ENCODE measurements at regions of chr2 and their contacts with region 1.

Region 1: GRCh38 chr2:27016801-27017325 is 15.9 kb upstream of the TMEM214 start:
- DNase-seq: peak in 6 of 7 donors; percentile 43 to 78 (median 70)
- H3K4me3 ChIP-seq: no peak overlapping the region
- H3K27ac ChIP-seq: peak overlapping the region in 2 of 5 donors; percentile 28 to 69
- H3K4me1 ChIP-seq: peaks cover 0 to 23% of the 10 kb centered on the region in 2 donors
- H3K27me3 ChIP-seq: no peaks in the 10 kb centered on the region
- CTCF ChIP-seq: peak; percentile 45 to 80 (median 69)
- POLR2A ChIP-seq: no peak

Region 2: DNA sequence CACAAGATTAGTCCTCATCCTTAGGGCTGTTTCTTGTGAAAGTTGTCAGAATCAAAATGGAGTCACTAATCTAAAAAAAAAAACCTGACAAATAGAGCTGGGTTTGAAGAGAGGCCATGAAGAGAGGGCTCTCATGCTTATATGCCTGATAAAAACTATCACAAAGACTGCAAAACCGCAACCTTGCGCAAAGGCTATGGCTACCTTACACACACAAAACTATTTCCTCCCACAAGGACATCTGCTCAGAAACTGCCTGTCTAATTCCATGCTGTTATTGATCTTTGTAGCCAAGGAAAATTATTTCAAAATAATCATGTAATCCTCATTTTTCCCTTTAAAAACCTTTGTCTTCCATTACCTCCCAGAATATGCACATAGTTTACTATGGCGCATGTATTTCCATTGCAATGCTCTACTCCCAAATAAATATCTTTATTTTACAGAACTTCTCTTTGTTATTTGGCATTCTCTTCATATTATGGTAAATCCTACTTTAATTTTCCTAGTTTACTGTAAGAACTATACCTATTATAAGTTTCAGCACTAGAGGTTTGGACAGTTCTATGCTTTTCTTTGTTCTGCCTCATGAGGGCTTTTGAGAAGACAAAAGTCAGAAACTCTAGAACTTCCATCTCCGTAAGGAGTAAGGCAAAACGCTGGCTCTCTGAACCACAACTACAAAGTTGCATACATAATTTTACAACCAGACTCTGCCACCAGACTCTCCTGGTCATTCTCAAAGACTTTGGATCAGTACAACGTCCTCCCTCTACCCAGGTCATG is 178.5 kb before region 1 on chr2:
- intact Hi-C with region 1: loop called in 1 of 2 experiments (anchors 10 kb)
- DNase-seq: no peak
- H3K4me3 ChIP-seq: no peak overlapping the region
- H3K27ac ChIP-seq: no peak overlapping the region
- H3K4me1 ChIP-seq: no peaks in the 10 kb centered on the region
- H3K27me3 ChIP-seq: peaks cover 7% of the 10 kb centered on the region
- CTCF ChIP-seq: no peak
- POLR2A ChIP-seq: no peak

Region 3: GRCh38 chr2:26959331-26959730 is 57.5 kb before region 1 on chr2:
- intact Hi-C with region 1: loop called (anchors 1 to 2 kb)
- DNase-seq: peak in 1 of 7 donors; percentile 39
- H3K4me3 ChIP-seq: no peak overlapping the region
- H3K27ac ChIP-seq: no peak overlapping the region
- H3K4me1 ChIP-seq: no peaks in the 10 kb centered on the region
- H3K27me3 ChIP-seq: peaks cover 10% of the 10 kb centered on the region
- CTCF ChIP-seq: no peak
- POLR2A ChIP-seq: no peak

Region 4: GRCh38 chr2:26968001-26968400 is 48.9 kb before region 1 on chr2:
- intact Hi-C with region 1: loop called in 1 of 2 experiments (anchors 1 kb)
- DNase-seq: no peak
- H3K4me3 ChIP-seq: no peak overlapping the region
- H3K27ac ChIP-seq: no peak overlapping the region
- H3K4me1 ChIP-seq: peaks cover 3 to 17% of the 10 kb centered on the region in 2 donors
- H3K27me3 ChIP-seq: no peaks in the 10 kb centered on the region
- CTCF ChIP-seq: no peak
- POLR2A ChIP-seq: no peak